HepG2 (cell line): ENCODE measurements at regions of chr2 and their contacts with region 1.

Region 1: DNA sequence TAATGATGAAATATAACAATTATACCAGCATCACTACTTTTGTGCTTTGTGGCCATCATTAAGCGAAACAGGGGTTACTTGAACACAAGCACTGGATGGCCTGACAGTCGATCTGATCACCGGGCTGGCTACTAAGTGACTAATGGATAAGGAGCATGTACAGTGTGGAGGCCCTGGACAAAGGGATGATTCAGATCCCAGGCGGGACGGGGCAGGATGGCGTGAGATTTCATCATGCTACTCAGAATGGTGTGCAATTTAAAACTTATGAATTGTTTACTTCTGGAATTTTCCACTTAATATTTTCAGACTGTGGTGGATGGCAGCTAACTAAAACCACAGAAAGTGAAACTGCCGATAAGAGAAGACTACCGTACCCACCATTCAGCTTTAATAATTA is 7.0 kb upstream of the CLIP4 start:
- DNase-seq: peak; percentile 84
- ATAC-seq: peak; percentile 97
- H3K4me3 ChIP-seq: peak overlapping the region in 2 of 3 experiments; percentile 5 to 11; a peak in 3 of 6 replicates
- H3K27ac ChIP-seq: no peak overlapping the region
- H3K4me1 ChIP-seq: peaks cover 30% of the 10 kb centered on the region
- H3K27me3 ChIP-seq: no peaks in the 10 kb centered on the region; a peak in 1 of 5 replicates
- CTCF ChIP-seq: no peak
- EP300 ChIP-seq: peak in 1 of 2 experiments; percentile 73; a peak in 1 of 4 replicates
- POLR2A ChIP-seq: no peak
- RAD21 ChIP-seq: no peak

Region 2: GRCh38 chr2:29130295-29130694 is 22.1 kb after region 1 on chr2:
- CTCF ChIA-PET with region 1: no interaction called
- POLR2A ChIA-PET with region 1: no interaction called
- in situ Hi-C with region 1: no loop called
- intact Hi-C with region 1: loop called (anchors 2 kb)
- DNase-seq: peak; percentile 35
- ATAC-seq: no peak
- H3K4me3 ChIP-seq: no peak overlapping the region
- H3K27ac ChIP-seq: peak overlapping the region; percentile 15
- H3K4me1 ChIP-seq: peaks cover 15% of the 10 kb centered on the region
- H3K27me3 ChIP-seq: no peaks in the 10 kb centered on the region
- CTCF ChIP-seq: no peak
- EP300 ChIP-seq: peak in 1 of 2 experiments; percentile 21; a peak in 1 of 4 replicates
- POLR2A ChIP-seq: no peak
- RAD21 ChIP-seq: no peak